HepG2 (cell line): ENCODE measurements at regions of chr17 and their contacts with region 1.

Region 1: DNA sequence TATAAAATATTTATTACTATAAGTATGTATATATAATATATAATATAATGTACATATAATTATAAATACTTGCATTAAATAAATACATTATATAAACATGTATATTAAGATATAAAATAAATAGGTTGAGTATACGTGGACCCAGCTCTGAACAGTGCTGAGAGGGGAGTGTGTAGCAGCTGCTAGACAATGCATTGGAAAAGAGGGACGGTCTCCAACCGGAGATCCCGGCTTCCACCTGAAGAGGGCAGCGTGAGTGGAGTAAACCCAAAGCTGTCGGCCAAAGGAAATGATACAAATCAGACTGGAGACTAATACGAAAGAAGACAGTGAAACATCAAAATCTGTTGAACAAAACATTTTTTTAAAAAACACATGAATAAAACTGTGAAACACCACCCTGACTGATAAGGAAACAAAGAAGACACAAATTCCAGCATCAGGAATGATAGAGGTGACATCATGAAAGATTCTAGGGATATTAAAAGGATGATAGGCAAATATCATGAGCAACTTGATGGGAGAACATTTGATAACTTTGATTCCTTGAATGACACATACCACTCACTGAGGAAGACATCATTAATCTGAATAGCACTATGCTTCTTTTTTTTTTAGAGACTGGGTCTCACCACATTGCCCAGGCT is 125.4 kb upstream of the CHMP6 start:
- DNase-seq: peak; percentile 56
- ATAC-seq: peak; percentile 92
- H3K4me3 ChIP-seq: no peak overlapping the region
- H3K27ac ChIP-seq: no peak overlapping the region
- H3K4me1 ChIP-seq: peaks cover 12% of the 10 kb centered on the region
- H3K27me3 ChIP-seq: no peaks in the 10 kb centered on the region
- CTCF ChIP-seq: peak; percentile 73
- EP300 ChIP-seq: no peak
- POLR2A ChIP-seq: no peak
- RAD21 ChIP-seq: peak; percentile 37; the same call in 1 of the 2 replicates

Region 2: DNA sequence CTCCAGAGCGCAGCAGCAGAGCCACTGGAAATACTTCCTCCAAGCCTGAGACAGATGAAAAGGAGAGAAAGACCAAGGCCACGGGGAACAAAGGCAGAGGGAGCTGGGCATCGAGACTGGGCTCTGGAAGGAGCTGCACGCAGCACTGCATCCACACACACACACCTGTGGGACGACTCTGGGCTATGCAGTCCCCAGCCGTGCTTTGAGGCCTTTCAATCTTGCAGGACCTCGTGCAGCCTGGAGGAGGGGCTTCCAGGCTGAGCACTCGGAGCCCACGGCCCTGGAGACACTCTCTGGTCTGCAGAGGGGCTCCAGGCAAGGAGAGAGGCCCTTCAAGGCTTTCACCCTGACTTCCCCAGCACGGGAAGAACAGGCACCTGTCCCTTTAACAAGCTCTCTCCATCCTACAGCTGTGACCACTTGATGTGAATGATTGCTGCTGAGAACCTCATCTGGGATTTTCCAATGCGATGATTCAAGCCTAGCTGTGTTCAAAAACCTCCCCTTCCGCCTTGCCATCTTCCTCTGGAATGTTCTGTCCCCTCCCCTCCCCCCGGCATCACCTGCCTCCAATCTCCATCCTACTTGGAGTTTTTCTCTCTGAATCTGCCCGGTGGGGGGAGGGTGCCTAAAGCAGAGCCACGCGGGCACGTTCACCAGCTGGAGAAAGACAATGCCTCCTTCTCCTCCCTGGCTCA is 1292.9 kb before region 1 on chr17:
- CTCF ChIA-PET with region 1: no interaction called
- POLR2A ChIA-PET with region 1: no interaction called
- in situ Hi-C with region 1: no loop called
- intact Hi-C with region 1: no loop called
- DNase-seq: no peak
- ATAC-seq: no peak; the same call in 2 of the 3 replicates
- H3K4me3 ChIP-seq: no peak overlapping the region
- H3K27ac ChIP-seq: no peak overlapping the region
- H3K4me1 ChIP-seq: no peaks in the 10 kb centered on the region
- H3K27me3 ChIP-seq: peaks cover 9 to 57% of the 10 kb centered on the region in 2 experiments
- CTCF ChIP-seq: no peak
- EP300 ChIP-seq: no peak
- POLR2A ChIP-seq: no peak
- RAD21 ChIP-seq: no peak

Region 3: GRCh38 chr17:80795754-80796153 is 70.5 kb before region 1 on chr17:
- CTCF ChIA-PET with region 1: no interaction called
- POLR2A ChIA-PET with region 1: no interaction called
- in situ Hi-C with region 1: no loop called
- intact Hi-C with region 1: no loop called
- DNase-seq: no peak
- ATAC-seq: no peak
- H3K4me3 ChIP-seq: no peak overlapping the region
- H3K27ac ChIP-seq: no peak overlapping the region
- H3K4me1 ChIP-seq: peaks cover 19% of the 10 kb centered on the region
- H3K27me3 ChIP-seq: no peaks in the 10 kb centered on the region
- CTCF ChIP-seq: no peak
- EP300 ChIP-seq: no peak
- POLR2A ChIP-seq: no peak
- RAD21 ChIP-seq: no peak

Region 4: DNA sequence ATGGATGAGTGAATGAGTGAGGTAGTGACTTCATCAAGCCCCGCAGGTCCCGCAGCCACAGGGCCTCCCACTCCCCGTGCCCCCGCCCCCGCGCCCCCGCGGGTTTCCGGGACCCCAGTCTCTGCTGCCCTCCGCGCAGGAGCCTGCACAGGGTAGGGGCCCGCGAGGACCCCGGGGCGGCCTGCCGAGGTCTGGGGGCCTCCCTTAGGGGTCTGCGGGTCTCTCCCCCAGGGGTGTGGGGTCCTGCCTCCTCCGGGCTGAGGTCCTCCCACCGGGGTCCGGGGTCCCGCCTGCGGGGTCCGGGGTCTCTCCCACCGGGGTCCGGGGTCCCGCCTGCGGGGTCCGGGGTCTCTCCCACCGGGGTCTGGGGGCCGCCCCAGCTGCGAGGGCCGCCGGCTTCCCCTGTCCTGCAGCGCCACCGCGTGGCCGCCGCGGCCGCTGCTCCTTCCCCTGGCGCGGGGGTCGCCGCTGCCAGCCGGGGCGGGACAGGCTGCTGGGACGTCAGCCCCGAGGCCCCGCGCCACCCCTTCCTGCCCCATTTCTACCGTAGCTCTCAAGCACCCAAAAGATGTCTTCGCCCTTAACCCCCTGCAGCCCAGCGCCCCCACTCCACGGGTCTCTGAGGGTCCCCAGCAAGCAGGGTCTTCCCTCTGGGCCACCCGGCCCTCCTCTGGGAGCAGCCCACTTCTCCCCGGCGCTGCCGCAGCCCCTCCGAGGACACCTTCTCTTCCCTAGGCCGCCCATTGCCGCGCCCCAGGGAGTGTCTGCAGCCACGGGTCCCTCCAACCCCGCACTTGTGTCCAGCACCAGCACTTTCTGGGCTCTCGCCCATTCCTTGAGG is 115.0 kb after region 1 on chr17:
- CTCF ChIA-PET with region 1: interaction called, 13 read pairs
- POLR2A ChIA-PET with region 1: no interaction called
- in situ Hi-C with region 1: no loop called
- intact Hi-C with region 1: loop called (anchors 1 kb)
- DNase-seq: no peak
- ATAC-seq: peak; percentile 62
- H3K4me3 ChIP-seq: peak overlapping the region in 2 of 3 experiments; percentile 22 to 56; a peak in 2 of 6 replicates
- H3K27ac ChIP-seq: no peak overlapping the region
- H3K4me1 ChIP-seq: peaks cover 21% of the 10 kb centered on the region
- H3K27me3 ChIP-seq: peaks cover 8 to 46% of the 10 kb centered on the region in 2 experiments; a peak in 4 of 5 replicates
- CTCF ChIP-seq: peak; percentile 73
- EP300 ChIP-seq: no peak
- POLR2A ChIP-seq: no peak
- RAD21 ChIP-seq: peak; percentile 96